ENCODE measurements at regions of chr1 and their contacts with region 1.

Region 1: GRCh38 chr1:31831397-31832378 is 15.9 kb upstream of the SPOCD1 start:
- DNase-seq: no peak
- H3K4me3 Mint-ChIP-seq: no peak overlapping the region
- H3K27ac Mint-ChIP-seq: no peak overlapping the region
- H3K4me1 Mint-ChIP-seq: peaks cover 30% of the 10 kb centered on the region
- H3K27me3 Mint-ChIP-seq: peaks cover 2% of the 10 kb centered on the region

Region 2: GRCh38 chr1:31605908-31606427 is 225.7 kb before region 1 on chr1:
- intact Hi-C with region 1: no loop called
- DNase-seq: no peak
- H3K4me3 Mint-ChIP-seq: no peak overlapping the region
- H3K27ac Mint-ChIP-seq: no peak overlapping the region
- H3K4me1 Mint-ChIP-seq: peaks cover 7% of the 10 kb centered on the region
- H3K27me3 Mint-ChIP-seq: peaks cover 16% of the 10 kb centered on the region

Region 3: GRCh38 chr1:31848381-31848897 is 16.8 kb after region 1 on chr1:
- intact Hi-C with region 1: loop called (anchors 2 kb)
- DNase-seq: peak; percentile 33
- H3K4me3 Mint-ChIP-seq: peak overlapping the region; percentile 61
- H3K27ac Mint-ChIP-seq: peak overlapping the region; percentile 76
- H3K4me1 Mint-ChIP-seq: peaks cover 52% of the 10 kb centered on the region
- H3K27me3 Mint-ChIP-seq: peaks cover 2% of the 10 kb centered on the region

Region 4: DNA sequence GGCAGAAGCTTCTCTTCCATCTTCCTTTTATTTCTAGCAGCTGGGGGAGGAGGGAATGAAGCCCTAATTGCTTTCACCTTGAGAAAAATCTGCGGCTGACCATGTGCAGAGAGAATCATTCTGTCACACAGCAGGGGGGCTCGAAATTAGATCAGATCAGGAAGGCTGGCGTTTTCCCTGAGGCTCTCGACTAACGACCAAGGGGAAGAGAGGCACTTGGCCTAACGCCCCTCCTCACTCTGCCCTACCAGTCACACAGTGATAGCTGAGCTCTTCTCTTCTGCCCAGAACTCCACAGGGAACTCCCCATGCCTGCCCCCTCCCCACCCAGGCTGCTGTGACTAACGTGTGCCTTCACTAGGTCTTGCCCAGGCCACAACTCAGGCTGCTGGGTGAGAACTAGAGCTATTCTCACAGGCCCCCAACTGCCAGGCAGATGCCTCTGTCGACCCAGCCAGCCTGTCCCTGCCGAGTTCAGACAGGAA is 155.5 kb after region 1 on chr1:
- intact Hi-C with region 1: no loop called
- DNase-seq: no peak
- H3K4me3 Mint-ChIP-seq: no peak overlapping the region
- H3K27ac Mint-ChIP-seq: no peak overlapping the region
- H3K4me1 Mint-ChIP-seq: peaks cover 57% of the 10 kb centered on the region
- H3K27me3 Mint-ChIP-seq: no peaks in the 10 kb centered on the region

Measured in activated T-helper 1 cell treated with anti-CD3 and anti-CD28 coated beads, Interleukin-12 subunit alpha, Interleukin-12 subunit beta, Interleukin-2, Interleukin-4 antibody, amounts not matched to agents 30 ng/mL and 10 ng/mL and 1 ng/mL, durations not matched to agents 14 hours and 24 hours and 36 hours (primary cell).